Prostate gland (tissue), 2 donors: ENCODE measurements at regions of chr2 and their contacts with region 1.

Region 1: DNA sequence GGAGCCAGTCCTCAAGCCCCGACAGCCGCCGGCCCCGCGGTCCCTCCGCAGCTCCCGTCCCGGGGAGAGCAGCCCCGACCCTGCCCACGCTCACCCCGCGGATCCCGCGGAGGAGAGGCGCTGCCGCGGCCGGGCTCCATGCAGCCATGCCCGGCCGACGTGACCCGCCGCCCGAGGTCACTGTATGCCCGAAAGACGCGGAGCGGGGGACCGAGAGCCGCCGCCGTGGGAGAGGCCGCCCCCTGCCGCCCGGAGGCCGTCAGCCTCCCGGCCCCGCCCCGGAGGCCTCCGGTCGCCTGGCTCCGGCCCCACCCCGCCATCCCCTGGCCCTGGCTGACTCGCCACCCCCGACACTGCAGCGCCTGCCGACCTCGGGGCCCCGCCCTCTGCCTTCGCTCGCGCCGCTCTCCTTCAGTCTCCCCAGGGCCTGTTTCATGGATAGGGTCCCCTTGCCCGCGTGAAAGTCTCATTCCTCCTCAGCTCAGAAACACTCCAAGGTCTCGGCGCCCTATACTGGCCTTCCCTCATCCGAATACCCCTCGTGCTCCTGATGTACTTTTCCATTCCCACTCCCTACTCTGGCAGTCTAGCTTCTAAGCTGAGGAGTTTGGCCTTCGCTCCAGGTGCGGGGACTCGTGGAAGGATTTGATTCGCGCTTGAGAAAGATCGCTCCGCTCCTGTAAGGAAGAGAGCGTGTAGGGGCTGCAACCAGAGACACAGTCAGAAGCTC is at the start of gene BOLA3:
- DNase-seq: peak; percentile 76
- H3K4me3 ChIP-seq: peak within 1 kb of the TSS; percentile 64 to 70
- H3K27ac ChIP-seq: peak within 1 kb of the TSS; percentile 55 to 78
- H3K4me1 ChIP-seq: no peaks in the 10 kb centered on the region
- H3K27me3 ChIP-seq: no peaks in the 10 kb centered on the region
- CTCF ChIP-seq: peak; percentile 45 to 81 (median 76)
- POLR2A ChIP-seq: no peak
- total RNA-seq, gene BOLA3: 50.0 to 77.5 TPM

Region 2: DNA sequence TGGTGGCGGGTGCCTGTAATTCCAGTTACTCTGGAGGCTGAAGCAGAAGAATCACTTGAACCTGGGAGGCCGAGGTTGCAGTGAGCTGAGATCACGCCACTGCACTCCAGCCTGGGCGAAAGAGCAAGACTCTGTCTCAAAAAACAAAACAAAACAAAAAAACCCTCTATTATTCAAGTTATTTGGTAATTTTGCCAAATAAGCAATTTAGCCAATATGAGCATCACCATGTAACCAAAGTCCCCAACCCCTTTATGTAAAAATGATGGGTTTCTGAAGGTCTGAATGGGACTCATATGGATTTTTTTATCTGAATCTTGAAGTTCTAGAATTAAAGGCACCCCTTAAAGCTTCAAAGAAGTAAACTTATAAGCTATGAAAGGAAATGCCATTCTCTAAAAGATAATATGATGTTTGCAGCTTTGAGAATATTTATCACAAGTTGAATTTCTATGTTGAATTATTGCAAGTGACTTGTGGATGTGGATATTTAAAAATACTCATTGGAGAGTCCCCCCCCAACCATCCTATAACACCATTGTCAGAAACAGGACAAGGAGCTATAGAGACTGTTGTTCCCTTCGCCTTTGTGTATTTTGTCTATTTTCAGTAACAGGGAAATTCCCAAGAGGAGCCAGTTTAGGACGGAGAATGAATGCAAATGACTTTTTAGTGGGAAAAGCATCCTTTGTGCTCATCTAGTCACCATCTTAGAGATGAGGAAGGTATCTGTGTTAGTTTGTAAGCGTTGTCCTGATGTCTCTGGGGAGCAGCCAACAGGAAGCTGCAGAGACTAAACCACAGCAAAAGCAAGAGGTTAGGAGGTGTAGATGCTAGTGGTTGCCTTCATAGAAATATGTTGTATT is 94.9 kb before region 1 on chr2:
- intact Hi-C with region 1: no loop called
- DNase-seq: no peak
- H3K4me3 ChIP-seq: no peak overlapping the region
- H3K27ac ChIP-seq: no peak overlapping the region
- H3K4me1 ChIP-seq: no peaks in the 10 kb centered on the region
- H3K27me3 ChIP-seq: no peaks in the 10 kb centered on the region
- CTCF ChIP-seq: no peak
- POLR2A ChIP-seq: no peak

Region 3: DNA sequence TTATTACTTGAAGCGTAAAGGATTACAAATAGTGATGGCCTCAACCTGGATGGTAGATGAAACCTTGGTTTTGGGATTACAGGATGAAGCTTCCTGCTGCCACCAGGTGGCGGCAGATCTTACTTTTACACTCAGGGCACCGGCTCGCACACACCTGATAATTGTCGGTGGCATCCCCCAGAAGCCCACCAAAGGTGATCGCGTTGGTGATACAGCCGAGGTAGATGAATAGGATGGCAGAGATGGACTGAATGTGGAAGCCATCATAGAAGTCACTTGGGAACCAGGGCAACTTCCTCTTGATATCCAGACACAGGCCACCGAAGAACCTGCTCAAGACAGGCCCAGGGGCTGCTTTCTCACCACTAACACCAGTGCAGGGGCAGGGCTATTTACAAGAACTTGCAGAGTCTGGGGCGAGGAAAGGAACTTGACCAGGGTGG is 102.3 kb after region 1 on chr2:
- intact Hi-C with region 1: loop called (anchors 10 kb)
- DNase-seq: peak; percentile 20
- H3K4me3 ChIP-seq: no peak overlapping the region
- H3K27ac ChIP-seq: no peak overlapping the region
- H3K4me1 ChIP-seq: no peaks in the 10 kb centered on the region
- H3K27me3 ChIP-seq: no peaks in the 10 kb centered on the region
- CTCF ChIP-seq: peak; percentile 57 to 74 (median 70)
- POLR2A ChIP-seq: no peak

Region 4: DNA sequence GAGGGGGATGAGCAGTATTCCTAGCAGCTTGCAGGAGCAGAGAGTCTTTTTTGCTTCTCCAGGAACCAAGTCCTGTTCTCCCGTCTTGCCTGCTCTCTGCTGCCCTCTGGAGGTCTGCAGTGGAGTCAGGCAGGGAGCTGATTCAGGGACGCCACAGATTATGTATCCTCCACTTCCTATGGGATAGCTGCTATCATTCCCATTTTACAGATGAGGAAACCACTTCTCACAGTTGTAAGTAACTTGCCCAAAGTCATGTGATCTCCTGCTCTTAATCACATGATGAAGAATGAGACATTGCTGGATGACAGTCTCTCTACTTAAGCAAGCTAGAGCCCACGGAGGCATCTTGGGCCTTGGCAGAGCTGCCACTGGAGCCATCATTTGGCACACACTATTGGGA is 187.0 kb after region 1 on chr2:
- intact Hi-C with region 1: loop called (anchors 10 kb)
- DNase-seq: peak; percentile 56
- H3K4me3 ChIP-seq: no peak overlapping the region
- H3K27ac ChIP-seq: no peak overlapping the region
- H3K4me1 ChIP-seq: no peaks in the 10 kb centered on the region
- H3K27me3 ChIP-seq: no peaks in the 10 kb centered on the region
- CTCF ChIP-seq: peak; percentile 71 to 81 (median 77)
- POLR2A ChIP-seq: no peak